PC-9 (cell line): ENCODE measurements at regions of chr16 and their contacts with region 1.

Region 1: GRCh38 chr16:53054670-53055485 is at the start of gene CHD9:
- DNase-seq: peak; percentile 78 to 84
- H3K4me3 ChIP-seq: peak within 1 kb of the TSS; percentile 91
- H3K27ac ChIP-seq: peak within 1 kb of the TSS; percentile 13; the same call in 1 of the 2 replicates
- H3K4me1 ChIP-seq: peaks cover 27% of the 10 kb centered on the region
- H3K27me3 ChIP-seq: no peaks in the 10 kb centered on the region
- CTCF ChIP-seq: peak; percentile 94
- total RNA-seq, gene CHD9: 19.2 and 26.3 TPM in 2 replicates

Region 2: DNA sequence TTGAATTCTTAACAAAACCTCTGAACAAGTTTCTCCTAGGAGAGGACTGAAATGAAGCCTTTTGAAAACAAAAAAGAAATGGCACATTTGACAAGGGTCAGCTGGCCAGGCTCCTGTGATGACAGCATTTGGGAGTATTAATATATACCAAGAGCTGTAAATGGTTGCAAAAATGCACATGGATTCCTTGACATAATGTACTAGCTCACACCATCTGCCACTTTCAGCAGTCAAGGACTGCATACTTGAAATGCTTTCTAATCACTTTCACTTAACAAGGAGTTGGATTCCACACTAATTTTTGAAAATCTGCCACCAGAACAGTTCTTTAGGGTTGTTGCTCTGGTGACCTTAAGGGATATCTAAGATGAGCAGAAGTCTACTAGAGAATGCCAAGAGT is 271.3 kb before region 1 on chr16:
- CTCF ChIA-PET with region 1: no interaction called
- POLR2A ChIA-PET with region 1: no interaction called
- intact Hi-C with region 1: no loop called
- DNase-seq: no peak
- H3K4me3 ChIP-seq: no peak overlapping the region
- H3K27ac ChIP-seq: no peak overlapping the region
- H3K4me1 ChIP-seq: no peaks in the 10 kb centered on the region
- H3K27me3 ChIP-seq: no peaks in the 10 kb centered on the region
- CTCF ChIP-seq: no peak

Region 3: DNA sequence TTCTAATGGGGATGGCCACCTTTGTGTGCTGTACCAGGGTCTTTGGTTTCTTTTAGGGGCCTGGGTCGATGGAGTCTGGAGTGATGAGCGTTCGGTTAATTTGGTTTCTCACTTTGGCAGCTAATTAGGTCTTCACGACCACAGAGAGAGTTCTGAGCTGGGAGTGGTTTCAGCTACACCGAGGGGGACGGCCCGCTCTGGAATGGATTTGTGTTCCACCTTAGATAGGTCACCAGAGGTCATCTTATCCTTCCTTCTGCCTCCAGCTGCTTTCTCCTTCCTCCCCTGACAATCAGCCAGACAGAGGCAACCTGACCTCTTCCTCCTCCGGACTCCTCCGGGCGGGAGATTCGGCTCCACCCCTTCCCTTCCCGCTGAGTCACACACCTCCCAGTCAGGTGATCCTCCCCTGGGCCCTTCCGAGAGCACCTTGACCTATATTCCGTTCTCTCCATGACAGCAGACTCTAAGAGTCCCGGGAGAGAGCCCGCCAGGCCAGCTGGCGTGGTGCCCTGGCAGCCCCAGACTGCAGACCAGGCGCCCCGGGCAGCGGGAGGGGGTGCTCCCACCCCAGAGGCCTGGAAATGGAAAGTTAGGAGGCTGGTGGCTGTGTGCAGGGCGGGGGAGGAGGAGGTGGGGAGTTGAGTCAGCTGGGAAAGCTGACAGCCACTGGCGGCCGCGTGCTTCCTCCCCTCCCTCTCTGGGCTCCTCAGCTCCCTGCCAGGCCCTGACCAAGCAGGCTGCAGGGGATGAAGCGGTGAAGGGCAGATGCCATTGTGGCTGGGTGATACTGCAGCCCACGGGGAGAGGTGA is 44.6 kb after region 1 on chr16:
- CTCF ChIA-PET with region 1: no interaction called
- POLR2A ChIA-PET with region 1: no interaction called
- intact Hi-C with region 1: loop called (anchors 1 kb)
- DNase-seq: peak; percentile 94 to 97
- H3K4me3 ChIP-seq: peak overlapping the region; percentile 51
- H3K27ac ChIP-seq: peak overlapping the region; percentile 94
- H3K4me1 ChIP-seq: peaks cover 60% of the 10 kb centered on the region
- H3K27me3 ChIP-seq: no peaks in the 10 kb centered on the region
- CTCF ChIP-seq: no peak

Region 4: GRCh38 chr16:53130159-53131049 is 75.5 kb after region 1 on chr16:
- CTCF ChIA-PET with region 1: no interaction called
- POLR2A ChIA-PET with region 1: no interaction called
- intact Hi-C with region 1: loop called (anchors 1 kb)
- DNase-seq: peak; percentile 83 to 95
- H3K4me3 ChIP-seq: peak overlapping the region; percentile 63
- H3K27ac ChIP-seq: peak overlapping the region; percentile 81
- H3K4me1 ChIP-seq: peaks cover 5% of the 10 kb centered on the region
- H3K27me3 ChIP-seq: no peaks in the 10 kb centered on the region
- CTCF ChIP-seq: peak; percentile 51; the same call in 1 of the 2 replicates

Region 5: DNA sequence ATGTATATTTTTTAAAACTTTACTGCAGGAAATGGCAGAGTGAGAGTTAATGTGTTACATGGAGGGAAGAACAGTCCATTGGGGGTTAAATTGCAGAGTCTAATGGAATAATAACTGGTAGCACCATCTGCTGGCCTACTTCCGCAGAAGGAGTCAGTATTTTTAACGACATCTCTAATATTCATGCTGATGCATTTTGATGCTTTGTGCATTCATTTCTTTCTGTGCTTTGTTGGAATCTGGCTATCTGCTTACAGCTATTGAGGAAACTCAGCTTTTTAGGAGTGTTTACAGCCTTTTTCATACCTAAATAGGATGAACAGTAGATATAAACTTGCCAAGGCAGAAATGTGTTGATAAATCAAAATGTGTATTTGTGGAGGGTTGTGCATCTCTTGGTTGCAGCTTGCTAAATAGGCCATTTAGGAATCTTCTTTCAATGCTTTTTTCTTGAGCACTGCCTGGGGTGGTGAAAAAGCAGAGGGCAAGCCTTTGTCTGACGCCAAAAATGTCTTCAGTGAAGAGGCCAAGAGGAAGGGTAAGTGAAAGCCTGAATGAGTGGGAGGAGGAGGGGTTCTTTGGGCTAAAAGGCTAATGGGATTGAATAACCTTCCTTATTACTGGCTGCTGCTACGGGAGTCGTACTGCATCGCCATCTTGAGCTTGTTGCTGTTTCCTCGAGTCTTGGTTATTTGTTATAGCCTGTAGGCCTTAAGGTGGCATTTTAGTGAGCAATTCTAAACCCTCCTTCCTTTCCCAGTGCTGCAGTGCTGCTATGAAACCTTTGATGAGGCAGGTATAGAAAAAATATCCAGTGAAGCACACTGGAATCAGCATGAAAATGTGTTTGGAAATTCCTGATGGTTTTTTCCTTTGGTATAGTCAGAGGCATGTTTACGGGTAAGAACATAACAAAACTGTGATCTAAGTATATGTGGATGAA is 153.2 kb after region 1 on chr16:
- CTCF ChIA-PET with region 1: interaction called, 5 read pairs
- POLR2A ChIA-PET with region 1: no interaction called
- intact Hi-C with region 1: loop called (anchors 2 kb)
- DNase-seq: peak in 1 of 2 experiments; percentile 27
- H3K4me3 ChIP-seq: no peak overlapping the region
- H3K27ac ChIP-seq: no peak overlapping the region
- H3K4me1 ChIP-seq: no peaks in the 10 kb centered on the region
- H3K27me3 ChIP-seq: no peaks in the 10 kb centered on the region
- CTCF ChIP-seq: peak; percentile 28; the same call in 1 of the 2 replicates

Region 6: GRCh38 chr16:53282975-53283946 is 228.4 kb after region 1 on chr16:
- CTCF ChIA-PET with region 1: interaction called, 3 read pairs
- POLR2A ChIA-PET with region 1: no interaction called
- intact Hi-C with region 1: loop called (anchors 1 kb)
- DNase-seq: peak in 1 of 2 experiments; percentile 53
- H3K4me3 ChIP-seq: no peak overlapping the region
- H3K27ac ChIP-seq: no peak overlapping the region
- H3K4me1 ChIP-seq: no peaks in the 10 kb centered on the region
- H3K27me3 ChIP-seq: no peaks in the 10 kb centered on the region
- CTCF ChIP-seq: peak; percentile 78

Region 7: GRCh38 chr16:53435066-53435688 is 380.3 kb after region 1 on chr16:
- CTCF ChIA-PET with region 1: no interaction called
- POLR2A ChIA-PET with region 1: no interaction called
- intact Hi-C with region 1: loop called (anchors 5 kb)
- DNase-seq: peak; percentile 61 to 92
- H3K4me3 ChIP-seq: peak overlapping the region; percentile 96
- H3K27ac ChIP-seq: peak overlapping the region; percentile 48
- H3K4me1 ChIP-seq: peaks cover 28% of the 10 kb centered on the region
- H3K27me3 ChIP-seq: no peaks in the 10 kb centered on the region
- CTCF ChIP-seq: no peak

Region 8: GRCh38 chr16:53503270-53503923 is 448.5 kb after region 1 on chr16:
- CTCF ChIA-PET with region 1: no interaction called
- POLR2A ChIA-PET with region 1: no interaction called
- intact Hi-C with region 1: loop called (anchors 1 kb)
- DNase-seq: peak; percentile 99
- H3K4me3 ChIP-seq: peak overlapping the region; percentile 88
- H3K27ac ChIP-seq: peak overlapping the region; percentile 74
- H3K4me1 ChIP-seq: peaks cover 27% of the 10 kb centered on the region
- H3K27me3 ChIP-seq: no peaks in the 10 kb centered on the region
- CTCF ChIP-seq: no peak